Pancreas (tissue), 10 donors: ENCODE measurements at regions of chr9 and their contacts with region 1.

Region 1: GRCh38 chr9:127525401-127526187 is 74.3 kb downstream of the LRSAM1 start:
- DNase-seq: peak in 2 of 6 donors; percentile 7 to 33
- ATAC-seq: peak in 2 of 4 donors; percentile 29 to 37
- H3K4me3 ChIP-seq: no peak overlapping the region
- H3K27ac ChIP-seq: no peak overlapping the region
- H3K4me1 ChIP-seq: peaks cover 0 to 11% (median 0%) of the 10 kb centered on the region in 3 donors
- H3K27me3 ChIP-seq: no peaks in the 10 kb centered on the region
- CTCF ChIP-seq: peak; percentile 32 to 46 (median 42)

Region 2: GRCh38 chr9:127723450-127723849 is 197.9 kb after region 1 on chr9:
- intact Hi-C with region 1: loop called in 1 of 3 experiments (anchors 10 kb)
- DNase-seq: no peak
- ATAC-seq: peak in 2 of 4 donors; percentile 22 to 44
- H3K4me3 ChIP-seq: no peak overlapping the region
- H3K27ac ChIP-seq: no peak overlapping the region
- H3K4me1 ChIP-seq: no peaks in the 10 kb centered on the region
- H3K27me3 ChIP-seq: no peaks in the 10 kb centered on the region
- CTCF ChIP-seq: no peak